ENCODE measurements at regions of chr15 and their contacts with region 1.

Region 1: GRCh38 chr15:70701891-70702568 is 61.3 kb downstream of the UACA start:
- DNase-seq: peak; percentile 88
- ATAC-seq: peak; percentile 92
- H3K4me3 ChIP-seq: peak overlapping the region; percentile 56
- H3K27ac ChIP-seq: peak overlapping the region; percentile 68
- H3K4me1 ChIP-seq: peaks cover 56% of the 10 kb centered on the region
- H3K27me3 ChIP-seq: no peaks in the 10 kb centered on the region
- CTCF ChIP-seq: no peak

Region 2: DNA sequence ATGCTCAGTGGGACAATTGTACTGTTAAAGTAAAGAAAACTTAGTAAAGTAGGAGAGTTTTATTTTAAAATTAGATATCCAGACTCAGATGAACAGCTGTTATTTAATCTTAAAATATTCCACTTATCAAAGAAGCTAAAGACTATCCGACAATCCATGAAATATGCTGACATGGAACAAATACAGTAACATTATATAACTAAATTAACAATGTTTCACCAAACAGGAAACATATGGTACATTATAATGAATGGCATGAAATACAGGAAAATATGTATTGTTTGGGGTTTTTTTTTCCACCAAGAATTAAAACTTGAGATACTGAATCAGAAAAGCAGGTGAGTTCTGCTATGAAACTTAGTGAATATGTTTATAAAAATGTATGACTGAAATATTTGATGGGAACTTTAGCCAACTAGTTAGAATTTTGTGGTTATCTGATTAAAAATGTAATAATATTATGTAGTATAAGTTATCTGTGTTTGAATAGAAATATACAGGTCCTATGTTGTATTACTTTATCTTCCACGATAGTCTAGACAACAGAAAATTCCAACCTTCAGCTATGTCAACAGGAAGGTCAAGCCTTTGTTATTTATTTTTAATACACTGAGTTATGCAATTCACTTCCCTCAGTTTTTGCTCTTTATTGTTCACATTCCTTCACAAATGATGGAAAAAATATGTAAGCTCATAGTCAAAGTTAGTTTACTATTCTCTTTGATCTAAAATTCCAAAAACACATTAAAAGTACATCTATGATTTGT is 11.4 kb before region 1 on chr15:
- CTCF ChIA-PET with region 1: no interaction called
- POLR2A ChIA-PET with region 1: no interaction called
- intact Hi-C with region 1: loop called (anchors 2 kb)
- DNase-seq: peak; percentile 45
- ATAC-seq: peak; percentile 60
- H3K4me3 ChIP-seq: no peak overlapping the region
- H3K27ac ChIP-seq: no peak overlapping the region
- H3K4me1 ChIP-seq: peaks cover 40% of the 10 kb centered on the region
- H3K27me3 ChIP-seq: no peaks in the 10 kb centered on the region
- CTCF ChIP-seq: no peak

Measured in PC-3 (cell line).